ENCODE measurements at regions of chr1 and their contacts with region 1.

Region 1: GRCh38 chr1:15966081-15966955 is 9.6 kb downstream of the ZBTB17 start:
- DNase-seq: peak; percentile 89
- H3K4me3 Mint-ChIP-seq: peak overlapping the region; percentile 87
- H3K27ac Mint-ChIP-seq: peak overlapping the region; percentile 100
- H3K4me1 Mint-ChIP-seq: peaks cover 65% of the 10 kb centered on the region
- H3K27me3 Mint-ChIP-seq: no peaks in the 10 kb centered on the region

Region 2: DNA sequence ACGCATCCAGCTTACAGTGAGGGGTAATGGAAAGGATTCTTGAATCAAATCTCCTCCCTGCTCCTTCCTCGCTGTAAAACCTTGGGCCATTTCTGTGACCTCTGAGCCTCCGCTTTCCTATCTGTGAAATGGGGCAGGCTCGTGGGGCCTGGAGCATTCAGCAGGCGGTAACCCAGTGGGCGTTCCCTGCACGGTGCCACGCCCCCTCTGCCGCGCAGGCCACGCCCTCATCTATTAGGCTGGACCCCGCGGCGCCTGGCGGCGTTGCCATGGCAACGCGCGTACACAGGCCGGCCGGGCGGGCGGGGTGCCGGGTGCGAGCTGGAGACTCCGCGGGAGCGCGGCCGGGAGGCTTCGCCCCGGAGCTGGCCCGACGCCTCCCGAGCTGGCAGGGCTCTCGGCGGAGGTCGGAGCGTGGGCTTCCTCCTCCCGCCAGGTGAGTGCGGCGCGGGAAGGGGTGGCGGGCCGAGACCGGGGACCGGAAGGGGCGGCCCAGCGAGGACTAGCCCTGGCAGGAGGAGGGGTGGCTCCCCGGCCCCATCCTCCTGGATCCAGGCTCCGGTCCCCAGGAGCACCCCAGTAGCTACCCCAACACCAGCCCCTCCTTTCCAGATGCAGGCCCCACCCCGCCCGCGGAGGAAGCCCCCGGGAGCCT is 719.2 kb before region 1 on chr1 and contains the start of gene FHAD1:
- intact Hi-C with region 1: loop called (anchors 5 kb)
- DNase-seq: peak; percentile 83
- H3K4me3 Mint-ChIP-seq: peak within 1 kb of the TSS; percentile 69
- H3K27ac Mint-ChIP-seq: peak within 1 kb of the TSS; percentile 83
- H3K4me1 Mint-ChIP-seq: peaks cover 46% of the 10 kb centered on the region
- H3K27me3 Mint-ChIP-seq: peaks cover 68% of the 10 kb centered on the region
- total RNA-seq, gene FHAD1: not detected in 2 replicates

Region 3: DNA sequence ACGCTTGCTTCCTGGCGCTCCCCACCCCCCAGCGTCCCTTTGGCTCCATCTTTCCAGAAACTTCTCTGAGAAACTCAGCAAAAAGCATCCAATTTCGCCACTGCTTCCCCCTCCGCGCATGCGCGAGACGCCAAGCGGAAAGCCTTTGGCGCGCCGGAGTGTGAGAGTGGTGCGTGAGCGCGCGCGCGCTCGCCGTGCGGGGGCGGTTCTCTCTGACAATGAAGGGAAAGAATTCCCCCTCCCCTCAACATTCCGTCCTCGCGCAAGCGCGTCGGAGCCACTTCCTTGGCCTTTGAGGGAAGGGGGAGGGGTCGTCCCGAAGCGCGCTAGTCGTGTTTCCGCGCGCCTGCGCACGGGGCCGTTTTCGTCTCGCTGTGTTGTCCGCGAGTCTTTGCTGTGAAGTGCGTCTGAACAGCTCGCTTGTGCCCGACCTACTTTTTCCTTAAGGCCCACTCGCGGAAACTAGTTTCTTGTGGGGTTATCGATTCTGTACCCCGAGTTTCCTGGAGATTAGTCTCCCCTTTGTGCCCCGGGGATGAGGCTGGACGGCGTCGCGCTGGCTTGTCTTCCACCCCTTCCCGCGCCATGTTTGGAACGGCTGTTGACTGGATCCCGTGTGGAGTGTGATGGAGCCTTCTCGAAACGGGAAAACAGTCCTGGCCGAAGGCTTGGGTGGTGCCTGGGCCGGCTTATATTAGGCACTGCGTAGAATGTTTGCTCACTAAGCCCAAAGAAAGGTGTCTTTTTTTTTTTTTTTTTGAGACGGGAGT is 130.4 kb before region 1 on chr1:
- intact Hi-C with region 1: loop called (anchors 1 kb)
- DNase-seq: peak; percentile 100
- H3K4me3 Mint-ChIP-seq: peak overlapping the region; percentile 95
- H3K27ac Mint-ChIP-seq: peak overlapping the region; percentile 99
- H3K4me1 Mint-ChIP-seq: peaks cover 29% of the 10 kb centered on the region
- H3K27me3 Mint-ChIP-seq: peaks cover 2% of the 10 kb centered on the region

Region 4: DNA sequence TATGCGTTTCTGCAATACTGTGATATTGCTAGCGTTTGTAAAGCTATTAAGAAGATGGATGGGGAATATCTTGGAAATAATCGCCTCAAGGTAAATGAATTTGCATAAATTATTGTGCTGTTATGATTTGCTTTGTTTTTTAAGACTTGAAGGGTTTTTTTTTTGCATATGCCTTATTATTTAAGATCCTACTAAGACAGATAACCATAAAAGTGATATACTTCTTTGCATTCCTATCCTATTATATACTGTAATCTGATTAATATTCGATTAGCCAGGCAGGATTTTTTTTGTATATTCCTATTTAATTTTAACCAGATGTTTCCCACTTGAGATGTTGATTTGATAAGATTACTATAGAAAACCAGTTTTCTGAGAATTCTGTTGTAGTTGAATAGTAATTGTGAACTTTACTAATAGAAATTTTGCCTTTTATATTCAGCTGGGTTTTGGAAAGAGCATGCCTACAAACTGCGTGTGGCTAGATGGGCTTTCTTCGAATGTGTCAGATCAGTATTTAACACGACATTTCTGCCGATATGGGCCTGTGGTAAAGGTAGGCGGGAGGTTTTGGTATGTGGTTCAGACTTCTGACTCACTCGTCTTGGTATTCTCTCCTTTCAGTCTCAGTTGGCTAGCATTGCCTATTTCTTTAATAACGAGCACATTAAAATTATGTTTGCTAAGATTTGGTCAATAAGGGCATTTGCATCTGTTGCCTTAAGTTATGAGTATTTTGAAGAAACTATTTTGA is 47.2 kb before region 1 on chr1:
- intact Hi-C with region 1: loop called (anchors 1 kb)
- DNase-seq: peak; percentile 88
- H3K4me3 Mint-ChIP-seq: peak overlapping the region; percentile 66
- H3K27ac Mint-ChIP-seq: peak overlapping the region; percentile 72
- H3K4me1 Mint-ChIP-seq: peaks cover 35% of the 10 kb centered on the region
- H3K27me3 Mint-ChIP-seq: no peaks in the 10 kb centered on the region

Region 5: GRCh38 chr1:15949453-15950245 is 16.7 kb before region 1 on chr1:
- intact Hi-C with region 1: loop called (anchors 1 kb)
- DNase-seq: peak; percentile 87
- H3K4me3 Mint-ChIP-seq: peak overlapping the region; percentile 67
- H3K27ac Mint-ChIP-seq: peak overlapping the region; percentile 94
- H3K4me1 Mint-ChIP-seq: peaks cover 73% of the 10 kb centered on the region
- H3K27me3 Mint-ChIP-seq: no peaks in the 10 kb centered on the region

Measured in activated CD4-positive, alpha-beta T cell treated with anti-CD3 and anti-CD28 coated beads, Interleukin-2, amount 10 ng/mL, durations not matched to agents 24 days and 14 days (primary cell).